AG04450 (cell line): ENCODE measurements at regions of chr1 and their contacts with region 1.

Region 1: DNA sequence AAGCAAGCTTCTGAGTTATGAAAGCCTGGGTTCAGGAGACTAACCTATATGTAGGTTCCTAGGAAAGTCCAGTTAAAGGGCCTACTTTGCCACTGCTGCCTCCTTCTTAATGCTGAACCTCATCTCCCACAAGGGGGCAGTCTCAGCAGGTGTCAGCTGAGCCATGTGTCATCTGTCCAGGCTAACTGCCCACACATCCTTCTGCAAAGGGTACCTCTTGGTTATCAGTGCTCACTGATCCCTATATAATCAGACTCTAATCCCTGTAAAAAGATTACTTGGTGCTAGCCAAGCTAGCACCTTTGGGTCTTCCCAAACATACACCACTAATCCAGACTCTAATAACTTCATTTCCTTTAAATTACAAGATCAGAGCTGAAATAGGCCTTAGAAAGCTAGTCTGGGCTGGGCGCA is 9.0 kb downstream of the PRDX1 start:
- DNase-seq: no peak
- H3K4me3 ChIP-seq: no peak overlapping the region
- H3K27ac ChIP-seq: peak overlapping the region; percentile 3
- H3K27me3 ChIP-seq: no peaks in the 10 kb centered on the region
- CTCF ChIP-seq: peak; percentile 72

Region 2: GRCh38 chr1:45569962-45570581 is 57.4 kb after region 1 on chr1:
- CTCF ChIA-PET with region 1: interaction called, 49 read pairs
- POLR2A ChIA-PET with region 1: interaction called, 3 read pairs
- DNase-seq: peak; percentile 58
- H3K4me3 ChIP-seq: no peak overlapping the region
- H3K27ac ChIP-seq: no peak overlapping the region
- H3K27me3 ChIP-seq: no peaks in the 10 kb centered on the region
- CTCF ChIP-seq: peak; percentile 99

Region 3: GRCh38 chr1:45658171-45658570 is 145.5 kb after region 1 on chr1:
- CTCF ChIA-PET with region 1: no interaction called
- POLR2A ChIA-PET with region 1: no interaction called
- DNase-seq: no peak
- H3K4me3 ChIP-seq: no peak overlapping the region
- H3K27ac ChIP-seq: no peak overlapping the region
- H3K27me3 ChIP-seq: no peaks in the 10 kb centered on the region
- CTCF ChIP-seq: no peak

Region 4: DNA sequence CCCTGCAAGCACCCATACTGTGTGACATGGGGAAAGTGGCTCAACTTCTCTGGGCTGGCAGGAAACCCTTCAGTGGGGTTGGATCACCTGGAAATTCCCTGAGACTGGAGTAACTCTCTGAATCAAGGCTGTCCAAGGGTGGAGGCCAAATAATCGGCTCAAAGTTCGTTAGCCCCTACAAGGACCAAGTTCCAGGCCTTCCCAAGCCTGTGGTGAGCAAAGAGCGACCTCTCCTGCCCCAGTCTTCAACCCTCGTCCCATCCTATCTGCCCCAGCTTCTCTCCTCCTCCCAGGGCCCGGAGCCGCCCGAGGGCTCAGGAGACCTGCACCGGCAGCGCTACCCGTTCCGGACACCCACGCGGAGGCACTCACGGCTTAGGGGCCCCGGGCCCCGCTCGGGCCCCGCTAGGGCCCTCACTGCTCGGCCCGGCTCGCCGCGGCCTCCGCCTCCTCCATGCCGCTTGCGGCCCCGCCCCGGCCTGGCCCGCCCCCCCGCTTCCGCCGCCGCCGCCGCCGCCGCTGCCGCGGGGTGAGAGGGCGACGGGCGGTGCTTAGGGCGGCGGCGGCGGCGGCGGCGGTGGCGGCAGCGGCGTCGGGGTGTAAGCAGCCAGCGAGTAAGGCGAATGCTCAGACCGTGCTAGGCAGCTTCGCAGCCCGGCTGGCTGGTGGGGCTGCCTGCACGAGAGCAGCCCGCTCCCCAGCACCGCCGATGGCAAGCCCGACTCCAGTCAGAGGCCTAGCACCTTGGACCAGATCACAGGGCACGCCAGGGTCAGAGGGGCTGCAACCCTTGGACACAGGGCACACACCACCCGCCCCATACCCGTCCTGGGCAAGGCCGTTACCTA is 685.5 kb after region 1 on chr1 and contains the start of gene POMGNT1:
- CTCF ChIA-PET with region 1: no interaction called
- POLR2A ChIA-PET with region 1: interaction called, 10 read pairs
- DNase-seq: no peak
- H3K4me3 ChIP-seq: peak within 1 kb of the TSS; percentile 92
- H3K27ac ChIP-seq: peak within 1 kb of the TSS; percentile 39
- H3K27me3 ChIP-seq: no peaks in the 10 kb centered on the region
- CTCF ChIP-seq: peak; percentile 7; the same call in 1 of the 2 replicates
- polyA plus RNA-seq, gene POMGNT1: 41.9 and 50.8 TPM in 2 replicates